Mammary epithelial cell (primary cell): ENCODE measurements at regions of chrX and their contacts with region 1.

Region 1: GRCh38 chrX:20141281-20142220 is at the start of gene EIF1AX:
- DNase-seq: peak; percentile 99
- H3K4me3 ChIP-seq: peak within 1 kb of the TSS; percentile 82 to 96 (median 93)
- H3K27ac ChIP-seq: peak within 1 kb of the TSS; percentile 91
- H3K4me1 ChIP-seq: peaks cover 16% of the 10 kb centered on the region
- H3K27me3 ChIP-seq: no peaks in the 10 kb centered on the region
- CTCF ChIP-seq: no peak
- total RNA-seq, gene EIF1AX: 65.5 to 201 TPM

Region 2: GRCh38 chrX:20159797-20160385 is 18.3 kb after region 1 on chrX:
- CTCF ChIA-PET with region 1: no interaction called
- dilution Hi-C with region 1: no loop called
- in situ Hi-C with region 1: no loop called
- intact Hi-C with region 1: loop called (anchors 1 kb)
- DNase-seq: peak; percentile 1
- H3K4me3 ChIP-seq: no peak overlapping the region
- H3K27ac ChIP-seq: no peak overlapping the region
- H3K4me1 ChIP-seq: no peaks in the 10 kb centered on the region
- H3K27me3 ChIP-seq: no peaks in the 10 kb centered on the region
- CTCF ChIP-seq: no peak

Region 3: DNA sequence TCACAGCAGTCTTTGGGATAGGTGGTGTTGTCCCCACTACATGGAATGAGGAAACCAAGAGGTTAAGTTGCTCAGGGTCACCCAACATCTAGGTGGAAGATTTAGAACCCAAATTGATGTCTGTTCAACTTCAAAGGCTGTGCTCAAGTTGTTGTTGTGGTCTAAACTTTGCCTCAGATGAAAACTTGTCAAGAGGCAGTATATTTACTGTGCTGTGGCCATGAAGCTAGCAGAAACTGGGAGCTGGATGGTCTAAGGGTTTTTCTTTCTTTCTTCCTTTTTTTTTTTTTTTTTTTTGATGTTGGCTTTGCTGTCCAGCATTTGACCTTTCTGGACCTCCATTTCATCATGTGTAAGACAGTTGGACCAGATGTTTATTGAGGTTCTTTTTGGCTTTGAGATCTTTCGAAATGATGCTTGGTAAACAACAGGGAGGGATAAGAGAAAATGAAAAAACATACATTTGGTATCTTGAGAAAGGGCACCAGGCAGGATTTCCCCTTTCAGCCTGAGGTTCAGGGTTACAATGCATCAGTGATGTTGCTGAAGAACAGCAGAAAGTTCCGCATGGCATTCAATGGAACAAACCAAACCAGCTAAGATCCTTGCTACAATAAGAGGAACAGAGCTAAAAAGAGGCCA is 291.3 kb after region 1 on chrX:
- CTCF ChIA-PET with region 1: no interaction called
- dilution Hi-C with region 1: no loop called
- in situ Hi-C with region 1: no loop called
- intact Hi-C with region 1: no loop called
- DNase-seq: no peak
- H3K4me3 ChIP-seq: no peak overlapping the region
- H3K27ac ChIP-seq: no peak overlapping the region
- H3K4me1 ChIP-seq: no peaks in the 10 kb centered on the region
- H3K27me3 ChIP-seq: no peaks in the 10 kb centered on the region
- CTCF ChIP-seq: no peak